ENCODE measurements at regions of chr6 and their contacts with region 1.

Region 1: DNA sequence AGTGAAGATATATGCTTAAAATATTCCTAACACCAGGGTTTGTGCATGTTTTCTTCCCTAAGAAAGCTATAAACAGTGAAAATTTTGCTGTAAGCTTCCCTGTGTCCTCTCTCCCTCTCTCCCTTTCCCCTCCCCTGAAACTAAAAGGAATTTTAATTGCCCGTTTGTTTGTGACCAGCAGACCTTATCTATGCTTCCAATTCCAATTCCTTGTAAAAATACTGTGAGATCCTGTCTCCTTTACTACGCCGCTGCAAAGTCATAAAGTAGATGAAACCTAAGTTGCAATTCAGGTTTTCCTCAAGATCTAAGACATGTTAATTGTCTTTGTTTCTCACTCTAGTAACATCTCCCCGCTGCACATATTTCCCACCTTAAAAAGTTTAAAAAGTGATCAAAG is 82.3 kb downstream of the DNAH8 start:
- DNase-seq: peak; percentile 58
- H3K4me3 ChIP-seq: no peak overlapping the region
- H3K27ac ChIP-seq: peak overlapping the region; percentile 66
- H3K4me1 ChIP-seq: peaks cover 30% of the 10 kb centered on the region
- H3K27me3 ChIP-seq: no peaks in the 10 kb centered on the region
- CTCF ChIP-seq: no peak
- POLR2A ChIP-seq: no peak

Region 2: GRCh38 chr6:38702558-38703397 is 94.6 kb before region 1 on chr6 and contains the start of gene GLO1:
- CTCF ChIA-PET with region 1: no interaction called
- POLR2A ChIA-PET with region 1: no interaction called
- dilution Hi-C with region 1: no loop called
- intact Hi-C with region 1: loop called (anchors 1 kb)
- DNase-seq: peak; percentile 99
- H3K4me3 ChIP-seq: peak within 1 kb of the TSS; percentile 48 to 80 (median 72)
- H3K27ac ChIP-seq: peak within 1 kb of the TSS; percentile 65
- H3K4me1 ChIP-seq: no peaks in the 10 kb centered on the region
- H3K27me3 ChIP-seq: no peaks in the 10 kb centered on the region
- CTCF ChIP-seq: no peak
- POLR2A ChIP-seq: peak; percentile 74
- total RNA-seq, gene GLO1: 120 and 135 TPM in 2 replicates

Region 3: GRCh38 chr6:38773338-38773737 is 24.1 kb before region 1 on chr6:
- CTCF ChIA-PET with region 1: interaction called, 10 read pairs
- POLR2A ChIA-PET with region 1: no interaction called
- dilution Hi-C with region 1: no loop called
- intact Hi-C with region 1: no loop called
- DNase-seq: peak; percentile 18
- H3K4me3 ChIP-seq: no peak overlapping the region
- H3K27ac ChIP-seq: no peak overlapping the region
- H3K4me1 ChIP-seq: peaks cover 22% of the 10 kb centered on the region
- H3K27me3 ChIP-seq: no peaks in the 10 kb centered on the region
- CTCF ChIP-seq: peak; percentile 50 to 58
- POLR2A ChIP-seq: no peak

Region 4: DNA sequence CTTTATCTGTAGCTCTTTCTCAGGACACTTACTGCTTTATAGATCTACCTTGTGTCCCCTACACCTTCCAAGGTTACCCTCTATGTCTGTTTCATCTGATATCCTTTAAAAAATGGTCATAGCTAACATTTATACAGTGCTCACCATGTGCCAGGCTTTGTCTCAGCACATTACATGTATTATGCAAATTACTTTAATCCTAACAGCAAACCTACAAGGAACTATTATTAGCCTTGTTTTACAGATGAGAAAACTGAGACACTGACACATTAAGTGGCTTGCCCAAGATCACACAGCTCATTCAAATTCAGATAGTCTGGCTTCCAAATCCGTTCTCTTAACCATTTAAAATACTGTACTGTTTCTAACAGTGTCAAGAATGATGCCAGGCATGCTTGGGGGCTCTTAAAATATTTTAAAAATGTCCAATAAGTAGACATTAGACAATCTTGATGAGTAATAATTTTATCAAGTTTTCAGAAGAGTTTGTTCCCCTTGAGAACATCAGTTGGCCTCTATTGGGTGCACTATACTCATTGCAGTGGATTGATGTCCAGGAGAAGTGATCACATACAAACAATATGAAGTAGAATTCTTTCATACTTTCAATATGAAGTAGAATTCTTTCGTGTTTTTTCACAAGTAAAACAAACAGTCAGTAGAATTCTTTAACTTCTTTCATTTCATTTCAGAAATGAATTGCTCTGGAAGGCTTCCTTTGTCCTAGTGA is 12.7 kb before region 1 on chr6:
- CTCF ChIA-PET with region 1: interaction called, 13 read pairs
- POLR2A ChIA-PET with region 1: no interaction called
- dilution Hi-C with region 1: no loop called
- intact Hi-C with region 1: loop called (anchors 1 kb)
- DNase-seq: peak; percentile 16
- H3K4me3 ChIP-seq: no peak overlapping the region
- H3K27ac ChIP-seq: no peak overlapping the region
- H3K4me1 ChIP-seq: peaks cover 44% of the 10 kb centered on the region
- H3K27me3 ChIP-seq: no peaks in the 10 kb centered on the region
- CTCF ChIP-seq: no peak
- POLR2A ChIP-seq: no peak

Region 5: DNA sequence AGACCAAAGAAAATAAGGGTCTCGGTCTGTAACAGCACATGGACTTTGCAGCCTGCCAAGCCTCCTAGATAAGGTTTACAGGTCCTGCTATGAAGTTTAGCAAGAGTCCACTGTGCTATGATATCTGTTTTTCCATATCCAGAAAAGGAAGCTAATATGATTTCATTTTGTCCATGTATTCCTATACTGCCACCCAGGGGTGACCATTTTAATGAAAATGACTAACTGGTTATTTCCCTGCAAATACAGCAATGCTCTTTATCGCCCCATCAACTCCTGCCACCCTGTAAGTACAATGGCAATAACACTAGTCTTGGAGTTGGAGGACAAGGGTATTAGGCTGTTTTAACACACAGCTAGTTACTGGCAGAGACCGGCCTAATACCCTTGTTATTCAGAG is 136.0 kb after region 1 on chr6:
- CTCF ChIA-PET with region 1: no interaction called
- POLR2A ChIA-PET with region 1: no interaction called
- dilution Hi-C with region 1: no loop called
- intact Hi-C with region 1: loop called (anchors 1 kb)
- DNase-seq: peak; percentile 76
- H3K4me3 ChIP-seq: no peak overlapping the region
- H3K27ac ChIP-seq: no peak overlapping the region
- H3K4me1 ChIP-seq: no peaks in the 10 kb centered on the region
- H3K27me3 ChIP-seq: peaks cover 8 to 11% of the 10 kb centered on the region in 2 experiments
- CTCF ChIP-seq: peak; percentile 17 to 27
- POLR2A ChIP-seq: no peak